ENCODE measurements at regions of chr2 and their contacts with region 1.

Region 1: DNA sequence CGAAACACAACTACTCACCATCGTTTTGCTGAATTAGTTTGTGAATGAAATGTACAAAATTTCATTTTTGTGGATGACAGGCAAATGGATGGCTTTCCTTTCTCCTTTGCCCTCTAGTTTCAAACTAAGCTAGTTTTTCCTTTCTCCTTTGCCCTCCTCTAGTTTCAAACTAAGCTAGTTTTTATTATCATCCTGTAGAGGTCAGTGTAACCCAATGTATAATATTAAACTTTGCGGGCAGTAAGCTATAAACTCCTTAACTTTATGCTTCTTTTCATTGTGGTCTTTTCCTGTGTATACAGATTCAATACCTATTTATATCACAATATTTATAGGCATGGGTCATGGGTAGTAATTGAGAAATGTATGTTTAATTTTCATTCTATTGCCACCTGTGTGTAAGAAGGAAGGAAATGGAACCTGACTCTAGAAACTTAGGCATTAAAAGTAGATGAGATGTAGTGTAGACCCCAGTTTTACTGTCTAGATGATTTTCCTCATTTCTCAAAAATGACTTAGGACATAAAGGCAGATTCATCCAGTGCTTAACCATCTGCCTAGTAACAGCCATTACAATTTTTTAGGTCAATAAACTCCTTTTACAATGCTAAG is 58.1 kb downstream of the MAP3K19 start:
- DNase-seq: peak; percentile 5
- H3K4me3 ChIP-seq: no peak overlapping the region
- H3K27ac ChIP-seq: no peak overlapping the region
- H3K4me1 ChIP-seq: no peaks in the 10 kb centered on the region
- H3K27me3 ChIP-seq: peaks cover 5% of the 10 kb centered on the region
- CTCF ChIP-seq: peak; percentile 29 to 48

Region 2: DNA sequence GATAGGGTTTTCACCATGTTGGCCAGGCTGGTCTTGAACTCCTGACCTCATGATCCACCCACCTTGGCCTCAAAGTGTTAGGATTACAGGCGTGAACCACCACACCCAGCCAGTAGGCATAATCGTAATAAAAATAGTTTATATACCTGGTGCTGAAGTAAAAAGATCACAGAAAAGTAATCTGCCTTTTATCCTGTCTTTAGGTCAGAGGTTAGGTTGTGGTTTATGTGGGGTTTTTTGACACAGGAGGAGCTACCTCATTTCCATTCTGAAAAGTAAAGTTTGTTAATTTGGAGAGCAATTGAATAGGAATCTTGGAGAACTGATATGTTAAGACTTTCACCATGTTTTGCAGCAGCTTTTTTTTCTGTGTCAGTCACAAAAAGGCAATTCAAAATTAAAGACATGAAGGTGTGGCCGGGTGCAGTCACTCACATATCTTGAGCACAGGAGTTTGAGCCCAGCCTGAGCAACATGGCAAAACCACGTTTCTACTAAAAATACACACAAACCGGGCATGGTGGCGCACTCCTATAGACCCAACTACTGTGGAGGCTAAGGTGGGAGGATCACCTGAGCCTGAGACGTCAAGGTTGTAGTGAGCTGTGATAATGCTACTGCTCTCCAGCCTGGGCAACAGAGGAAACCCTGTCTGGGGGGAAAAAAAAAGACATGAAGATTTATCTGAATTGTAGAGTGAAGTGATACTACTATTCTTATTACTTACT is 39.0 kb before region 1 on chr2:
- CTCF ChIA-PET with region 1: no interaction called
- dilution Hi-C with region 1: no loop called
- in situ Hi-C with region 1: no loop called
- intact Hi-C with region 1: no loop called
- DNase-seq: no peak
- H3K4me3 ChIP-seq: no peak overlapping the region
- H3K27ac ChIP-seq: no peak overlapping the region
- H3K4me1 ChIP-seq: no peaks in the 10 kb centered on the region
- H3K27me3 ChIP-seq: no peaks in the 10 kb centered on the region
- CTCF ChIP-seq: no peak

Region 3: DNA sequence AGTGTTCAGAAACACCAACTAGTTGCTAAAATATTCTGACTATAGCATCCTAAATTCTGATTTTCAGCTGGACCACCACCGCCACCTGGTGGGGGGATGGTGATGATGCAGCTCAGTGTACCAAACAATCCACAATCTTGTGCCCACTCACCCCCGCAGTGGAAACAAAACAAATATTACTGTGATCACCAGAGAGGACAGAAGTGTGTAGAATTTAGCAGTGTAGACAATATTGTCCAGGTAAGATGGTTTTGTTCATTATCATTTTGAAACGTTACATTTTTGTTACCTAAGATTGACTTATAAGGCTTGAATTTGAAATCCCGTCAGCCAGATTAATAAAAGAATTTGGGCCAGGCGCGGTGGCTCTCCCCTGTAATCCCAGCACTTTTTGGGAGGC is 720.9 kb after region 1 on chr2:
- CTCF ChIA-PET with region 1: no interaction called
- dilution Hi-C with region 1: no loop called
- in situ Hi-C with region 1: loop called in 1 of 2 experiments (anchors 25 kb)
- intact Hi-C with region 1: loop called (anchors 1 kb)
- DNase-seq: peak; percentile 16
- H3K4me3 ChIP-seq: no peak overlapping the region
- H3K27ac ChIP-seq: no peak overlapping the region
- H3K4me1 ChIP-seq: no peaks in the 10 kb centered on the region
- H3K27me3 ChIP-seq: no peaks in the 10 kb centered on the region
- CTCF ChIP-seq: peak; percentile 90 to 94

Region 4: DNA sequence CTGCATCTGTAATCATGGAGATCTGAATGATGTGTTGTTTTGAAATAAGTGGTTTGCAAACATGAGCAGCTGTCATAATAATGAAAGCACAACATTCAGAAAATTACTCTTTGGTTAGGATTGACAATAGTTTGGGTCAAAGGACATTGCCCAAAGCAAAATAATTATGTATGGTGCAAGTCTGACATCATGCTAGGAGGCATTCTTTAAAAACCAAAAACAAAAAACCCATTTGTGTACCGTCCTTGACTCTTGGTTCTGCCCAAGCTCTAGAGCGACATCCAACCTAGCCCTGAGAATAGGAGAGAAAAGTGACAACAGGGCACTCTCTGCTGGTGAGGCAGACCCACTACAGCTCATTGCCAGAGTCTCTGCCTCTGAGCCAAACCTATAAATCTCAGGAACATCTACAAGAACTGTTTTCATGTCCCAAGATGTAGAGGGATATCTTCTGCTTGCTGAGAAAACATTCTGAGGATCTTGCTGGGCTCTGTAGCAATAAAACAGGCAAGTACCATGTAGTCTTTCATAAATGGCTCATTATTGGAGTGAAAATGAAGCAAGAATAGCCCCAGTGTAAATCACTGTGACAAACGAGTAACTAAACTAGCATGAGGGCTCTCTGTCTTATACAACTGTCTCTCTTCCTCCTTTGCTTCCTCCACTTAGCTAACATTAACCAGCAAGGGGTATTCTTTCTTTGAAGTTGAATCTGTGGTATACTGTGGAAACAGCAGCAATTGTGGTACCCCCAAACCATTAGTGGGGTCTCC is 1395.6 kb after region 1 on chr2:
- CTCF ChIA-PET with region 1: no interaction called
- dilution Hi-C with region 1: no loop called
- in situ Hi-C with region 1: loop called in 1 of 2 experiments (anchors 25 kb)
- intact Hi-C with region 1: loop called (anchors 1 kb)
- DNase-seq: peak; percentile 40
- H3K4me3 ChIP-seq: no peak overlapping the region
- H3K27ac ChIP-seq: no peak overlapping the region
- H3K4me1 ChIP-seq: no peaks in the 10 kb centered on the region
- H3K27me3 ChIP-seq: peaks cover 2% of the 10 kb centered on the region
- CTCF ChIP-seq: peak; percentile 58 to 64

Measured in mammary epithelial cell (primary cell).